ENCODE measurements at regions of chr2 and their contacts with region 1.

Region 1: GRCh38 chr2:241659150-241659739 is 21.8 kb downstream of the ATG4B start:
- DNase-seq: peak; percentile 78
- ATAC-seq: peak; percentile 74
- H3K4me3 ChIP-seq: no peak overlapping the region
- H3K27ac ChIP-seq: peak overlapping the region; percentile 18
- H3K4me1 ChIP-seq: no peaks in the 10 kb centered on the region
- H3K27me3 ChIP-seq: no peaks in the 10 kb centered on the region
- CTCF ChIP-seq: peak; percentile 93
- EP300 ChIP-seq: no peak
- POLR2A ChIP-seq: no peak
- RAD21 ChIP-seq: peak; percentile 93

Region 2: GRCh38 chr2:240775905-240776304 is 883.3 kb before region 1 on chr2:
- CTCF ChIA-PET with region 1: no interaction called
- POLR2A ChIA-PET with region 1: no interaction called
- in situ Hi-C with region 1: no loop called
- intact Hi-C with region 1: no loop called
- DNase-seq: no peak
- ATAC-seq: no peak; the same call in 2 of the 3 replicates
- H3K4me3 ChIP-seq: no peak overlapping the region
- H3K27ac ChIP-seq: no peak overlapping the region
- H3K4me1 ChIP-seq: no peaks in the 10 kb centered on the region
- H3K27me3 ChIP-seq: peaks cover 25 to 86% of the 10 kb centered on the region in 2 experiments; a peak in 4 of 5 replicates
- CTCF ChIP-seq: no peak
- EP300 ChIP-seq: no peak
- POLR2A ChIP-seq: no peak
- RAD21 ChIP-seq: no peak

Region 3: GRCh38 chr2:241637000-241637791 is 22.0 kb before region 1 on chr2 and contains the starts of genes ATG4B and THAP4:
- CTCF ChIA-PET with region 1: interaction called, 6 read pairs
- POLR2A ChIA-PET with region 1: interaction called, 5 read pairs
- in situ Hi-C with region 1: no loop called
- intact Hi-C with region 1: loop called (anchors 1 kb)
- DNase-seq: peak; percentile 76
- ATAC-seq: peak; percentile 76
- H3K4me3 ChIP-seq: peak within 1 kb of the TSS; percentile 95 to 100 (median 99)
- H3K27ac ChIP-seq: peak within 1 kb of the TSS; percentile 100
- H3K4me1 ChIP-seq: peaks cover 55% of the 10 kb centered on the region
- H3K27me3 ChIP-seq: no peaks in the 10 kb centered on the region; a peak in 1 of 5 replicates
- CTCF ChIP-seq: 0 out of 2 replicates have a peak, but pooled peaks have one; percentile 4
- EP300 ChIP-seq: no peak; a peak in 2 of 4 replicates
- POLR2A ChIP-seq: peak in 1 of 2 experiments; percentile 90; a peak in 2 of 4 replicates
- RAD21 ChIP-seq: peak; percentile 68
- total RNA-seq, gene ATG4B: 95.5 and 96.3 TPM in 2 replicates
- total RNA-seq, gene THAP4: 68.2 and 75.7 TPM in 2 replicates

Region 4: DNA sequence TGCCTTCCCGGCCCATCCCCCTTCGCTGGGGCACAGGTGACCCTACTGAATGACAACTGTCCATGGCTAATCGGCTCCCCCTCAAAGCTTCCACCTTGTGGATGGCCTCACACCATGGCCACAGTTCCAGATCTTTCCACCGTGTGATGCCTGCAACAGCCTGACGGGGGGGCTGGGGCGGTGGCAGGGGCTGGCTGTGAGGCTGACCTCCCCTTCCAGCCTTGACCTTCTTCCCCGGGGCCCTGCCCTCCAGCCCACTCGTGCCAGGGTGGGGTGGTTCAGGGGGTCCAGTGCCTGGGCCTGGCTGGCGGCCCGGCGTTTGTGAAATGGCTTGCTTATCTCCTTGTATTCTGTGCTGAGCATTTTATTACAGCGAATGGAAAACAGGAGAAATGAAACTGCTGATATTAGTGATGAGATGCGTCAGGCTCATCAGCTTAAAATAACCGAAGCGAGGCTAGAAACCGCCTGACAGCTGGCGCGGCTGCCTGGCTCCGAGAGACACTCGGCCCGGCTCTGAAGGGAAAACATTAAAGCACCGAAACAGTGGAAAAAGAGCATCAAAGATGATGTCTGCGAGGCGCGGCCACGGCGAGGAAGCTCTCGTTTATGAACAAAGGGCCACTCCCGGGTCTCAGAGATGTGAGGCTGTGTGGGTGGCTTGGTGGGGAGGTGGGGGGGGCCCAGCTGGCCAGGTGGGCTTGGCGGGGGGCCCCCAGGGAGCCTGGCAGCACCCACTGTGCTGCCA is 200.4 kb after region 1 on chr2:
- CTCF ChIA-PET with region 1: no interaction called
- POLR2A ChIA-PET with region 1: no interaction called
- in situ Hi-C with region 1: no loop called
- intact Hi-C with region 1: no loop called
- DNase-seq: no peak
- ATAC-seq: peak; percentile 45
- H3K4me3 ChIP-seq: peak overlapping the region in 1 of 3 experiments; percentile 14; a peak in 1 of 6 replicates
- H3K27ac ChIP-seq: no peak overlapping the region
- H3K4me1 ChIP-seq: peaks cover 14% of the 10 kb centered on the region
- H3K27me3 ChIP-seq: peaks cover 21 to 84% of the 10 kb centered on the region in 2 experiments
- CTCF ChIP-seq: peak; percentile 31
- EP300 ChIP-seq: no peak
- POLR2A ChIP-seq: no peak
- RAD21 ChIP-seq: no peak

Region 5: GRCh38 chr2:241877989-241878970 is 219.0 kb after region 1 on chr2:
- CTCF ChIA-PET with region 1: no interaction called
- POLR2A ChIA-PET with region 1: no interaction called
- in situ Hi-C with region 1: loop called (anchors 5 kb)
- intact Hi-C with region 1: no loop called
- DNase-seq: peak; percentile 58
- ATAC-seq: peak; percentile 58
- H3K4me3 ChIP-seq: no peak overlapping the region
- H3K27ac ChIP-seq: no peak overlapping the region
- H3K4me1 ChIP-seq: peaks cover 21% of the 10 kb centered on the region
- H3K27me3 ChIP-seq: peaks cover 7 to 23% of the 10 kb centered on the region in 2 experiments
- CTCF ChIP-seq: peak; percentile 87
- EP300 ChIP-seq: no peak
- POLR2A ChIP-seq: no peak
- RAD21 ChIP-seq: peak; percentile 58; the same call in 1 of the 2 replicates